Activated naive CD4-positive, alpha-beta T cell treated with anti-CD3 and anti-CD28 coated beads for 36 hours (primary cell): ENCODE measurements at regions of chr12 and their contacts with region 1.

Region 1: DNA sequence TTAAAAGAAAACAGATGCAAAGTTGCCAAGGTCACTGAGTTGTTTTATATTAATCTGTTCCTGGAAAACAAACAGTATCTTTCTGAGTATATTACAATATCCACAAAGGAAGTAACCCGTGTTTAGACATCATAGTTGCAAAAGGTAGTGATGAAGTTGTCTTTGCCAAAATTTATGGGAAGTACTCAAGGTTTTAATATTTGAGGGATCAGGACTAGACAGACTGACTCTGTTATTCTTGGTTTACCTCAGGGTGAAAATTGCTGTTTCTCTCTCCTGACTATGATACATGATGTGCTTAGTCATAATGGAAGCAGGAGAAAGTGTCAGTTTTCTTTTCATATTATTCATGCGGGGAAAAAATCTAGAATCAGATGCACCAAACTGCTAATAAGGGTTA is 28.3 kb downstream of the TMEM233 start:
- DNase-seq: no peak
- H3K4me3 Mint-ChIP-seq: no peak overlapping the region
- H3K27ac Mint-ChIP-seq: no peak overlapping the region
- H3K4me1 Mint-ChIP-seq: peaks cover 4% of the 10 kb centered on the region
- H3K27me3 Mint-ChIP-seq: peaks cover 20% of the 10 kb centered on the region

Region 2: DNA sequence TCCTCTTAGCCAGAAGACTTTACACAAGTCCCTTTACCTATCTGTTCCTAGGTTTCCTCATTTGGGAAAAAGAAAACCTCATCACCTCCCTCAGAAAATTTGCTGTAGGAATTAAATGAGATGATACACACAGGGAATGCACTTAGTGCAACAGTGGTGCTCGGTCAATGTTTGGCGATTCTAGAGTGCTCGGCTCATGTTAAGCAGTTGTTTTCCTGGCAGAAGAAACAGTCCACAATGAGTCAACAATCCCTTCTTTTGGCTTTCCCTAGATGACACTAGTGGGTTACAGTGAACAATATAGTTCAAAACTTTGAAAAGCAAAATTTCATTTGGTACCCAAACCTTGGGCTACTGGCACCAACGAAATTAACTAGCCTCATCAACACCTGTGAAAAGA is 32.2 kb before region 1 on chr12:
- CTCF ChIA-PET with region 1: no interaction called
- intact Hi-C with region 1: loop called (anchors 2 kb)
- DNase-seq: no peak
- H3K4me3 Mint-ChIP-seq: no peak overlapping the region
- H3K27ac Mint-ChIP-seq: no peak overlapping the region
- H3K4me1 Mint-ChIP-seq: peaks cover 6% of the 10 kb centered on the region
- H3K27me3 Mint-ChIP-seq: peaks cover 47% of the 10 kb centered on the region